ENCODE measurements at regions of chr12 and their contacts with region 1.

Region 1: GRCh38 chr12:92938018-92938417 is 8.9 kb upstream of the EEA1 start:
- DNase-seq: no peak
- H3K4me3 ChIP-seq: no peak overlapping the region
- H3K27ac ChIP-seq: no peak overlapping the region
- H3K27me3 ChIP-seq: no peaks in the 10 kb centered on the region
- CTCF ChIP-seq: no peak

Region 2: GRCh38 chr12:92871116-92871515 is 66.9 kb before region 1 on chr12:
- intact Hi-C with region 1: no loop called
- DNase-seq: no peak
- H3K4me3 ChIP-seq: peak overlapping the region in 7 of 59 donors; percentile 2 to 31 (median 9)
- H3K27ac ChIP-seq: no peak overlapping the region
- H3K27me3 ChIP-seq: no peaks in the 10 kb centered on the region
- CTCF ChIP-seq: no peak

Region 3: DNA sequence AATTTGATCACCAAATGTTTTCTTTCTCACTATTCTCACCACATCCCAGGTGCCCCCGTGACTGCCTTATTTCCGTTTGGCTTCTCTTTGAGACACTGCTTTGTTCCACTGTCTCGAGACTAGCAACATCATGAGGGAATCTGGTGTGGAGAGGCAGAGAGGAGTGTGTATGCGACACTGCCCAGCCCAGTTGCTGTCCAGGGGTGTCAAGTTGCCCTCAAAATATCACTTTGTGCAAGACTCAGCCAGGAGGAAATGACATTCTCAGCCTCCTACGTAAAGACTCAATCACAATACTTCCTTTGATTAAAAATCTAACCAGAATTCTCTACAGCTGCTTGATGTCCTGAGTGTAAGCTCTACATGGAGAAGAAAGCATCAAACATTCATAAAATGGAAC is 39.3 kb after region 1 on chr12:
- intact Hi-C with region 1: loop called in 1 of 2 experiments (anchors 5 kb)
- DNase-seq: no peak
- H3K4me3 ChIP-seq: no peak overlapping the region
- H3K27ac ChIP-seq: no peak overlapping the region
- H3K27me3 ChIP-seq: no peaks in the 10 kb centered on the region
- CTCF ChIP-seq: no peak